ENCODE measurements at regions of chr9 and their contacts with region 1.

Region 1: GRCh38 chr9:122125158-122125508 is 32.0 kb upstream of the TTLL11 start:
- DNase-seq: peak; percentile 90
- CTCF ChIP-seq: peak; percentile 83

Region 2: DNA sequence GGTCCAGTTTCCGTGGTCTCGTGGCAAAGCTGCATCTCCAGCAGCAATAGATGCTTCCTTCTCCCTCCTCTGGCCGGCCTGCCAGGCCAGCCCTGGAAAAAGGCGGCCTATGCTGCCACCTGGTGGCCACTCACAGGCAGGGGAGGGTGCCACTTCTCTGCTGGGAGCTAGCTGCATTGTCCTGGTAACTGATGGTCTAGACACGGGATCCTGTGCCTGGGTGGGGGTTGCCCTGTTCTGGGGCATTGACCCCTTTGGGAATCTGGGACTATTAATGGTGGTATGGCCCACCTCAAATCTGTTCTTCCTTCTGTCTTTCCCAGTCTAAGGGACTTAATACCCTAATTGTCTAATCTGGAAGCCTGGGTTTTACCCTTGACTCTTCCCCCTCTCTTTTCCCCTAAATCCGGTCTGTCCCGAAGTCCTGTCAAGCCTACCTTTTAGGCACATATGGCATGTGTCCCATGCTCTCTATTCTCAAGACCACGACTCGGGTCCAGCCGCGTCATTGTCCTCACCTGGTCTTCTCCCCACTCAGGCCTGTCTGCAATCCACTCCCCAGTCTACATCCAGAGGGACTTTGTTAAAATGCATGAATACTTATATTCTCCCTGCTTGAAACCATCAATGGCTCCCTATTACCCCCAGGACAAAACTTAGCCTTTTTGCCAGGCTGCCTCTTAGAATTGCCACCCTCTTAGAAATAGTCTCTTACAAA is 225.7 kb after region 1 on chr9:
- in situ Hi-C with region 1: loop called (anchors 5 kb)
- DNase-seq: peak; percentile 85
- CTCF ChIP-seq: peak; percentile 97

Region 3: DNA sequence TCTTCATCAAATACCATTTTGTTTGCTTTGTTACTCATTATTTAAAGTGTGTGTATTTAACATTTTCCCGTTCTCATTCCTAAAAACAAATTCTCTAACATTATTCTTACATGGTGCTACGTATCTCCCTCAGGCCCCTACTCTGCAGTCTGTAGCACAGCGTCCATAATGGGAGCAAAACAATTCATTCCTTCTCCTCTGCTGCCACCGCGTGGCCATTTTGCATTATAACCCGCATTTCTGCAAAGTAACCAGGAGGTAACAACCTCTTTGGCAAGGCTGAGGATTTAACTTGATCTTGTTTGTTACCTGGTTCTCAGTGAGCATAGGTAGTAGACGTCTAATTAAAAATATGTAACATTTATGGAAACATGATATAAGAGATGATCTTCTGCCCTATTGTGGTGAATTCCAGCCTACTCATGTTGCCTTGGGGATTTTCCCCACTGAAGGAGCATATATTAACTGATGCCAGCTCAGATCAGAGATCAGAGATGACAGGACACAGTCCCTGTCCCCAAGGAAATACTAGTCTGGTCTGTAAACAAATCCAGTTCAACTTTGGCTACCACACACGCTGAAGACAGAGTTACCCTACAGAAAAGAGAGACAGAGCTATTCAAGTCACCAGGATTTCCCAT is 685.3 kb after region 1 on chr9:
- in situ Hi-C with region 1: loop called (anchors 10 kb)
- DNase-seq: peak; percentile 83
- CTCF ChIP-seq: peak; percentile 67

Measured in GM13976 (cell line).